Right ventricle myocardium inferior (tissue), 1 donor: ENCODE measurements at regions of chr5 and their contacts with region 1.

Region 1: GRCh38 chr5:111278845-111279504 is 54.8 kb downstream of the CAMK4 start:
- DNase-seq: peak; percentile 74
- ATAC-seq: no peak

Region 2: DNA sequence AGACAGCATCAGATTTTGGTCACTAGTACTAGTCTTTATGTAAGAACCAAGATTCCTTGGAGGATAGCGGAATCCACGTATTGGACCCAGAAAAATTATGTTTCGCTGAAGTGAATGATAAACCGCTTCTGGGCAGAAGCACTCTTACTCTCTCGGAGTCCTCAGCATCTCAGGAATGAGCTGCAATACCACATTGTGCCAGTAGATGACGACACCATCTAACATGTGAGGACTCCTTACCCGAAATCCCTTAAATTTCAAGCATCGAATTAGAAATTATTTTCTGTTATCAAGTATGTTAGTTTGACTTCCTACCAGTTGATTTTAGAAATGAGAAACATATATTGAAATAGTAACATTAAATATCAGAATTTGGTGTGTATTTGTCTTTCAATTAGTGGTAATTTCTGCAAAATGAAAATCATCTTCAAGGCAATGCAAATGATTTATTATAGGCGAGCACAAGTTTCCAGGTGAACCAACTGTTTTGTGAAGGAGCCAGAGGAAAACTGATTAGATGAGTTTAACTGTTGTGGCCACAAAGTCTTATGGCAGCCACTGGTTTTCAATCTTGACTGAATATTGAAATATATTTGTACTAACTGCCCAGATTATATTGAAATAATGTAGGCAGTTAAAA is 120.8 kb before region 1 on chr5:
- intact Hi-C with region 1: loop called (anchors 5 kb)
- DNase-seq: no peak
- ATAC-seq: no peak

Region 3: GRCh38 chr5:111486055-111486454 is 207.1 kb after region 1 on chr5:
- intact Hi-C with region 1: no loop called
- DNase-seq: no peak
- ATAC-seq: no peak